Left lung (tissue), 14 donors: ENCODE measurements at regions of chr17 and their contacts with region 1.

Region 1: GRCh38 chr17:75109407-75110233 is at the start of gene ARMC7:
- DNase-seq: peak; percentile 77 to 99 (median 92)
- ATAC-seq: peak; percentile 86
- H3K4me3 ChIP-seq: peak within 1 kb of the TSS; percentile 81 to 87
- H3K27ac ChIP-seq: peak within 1 kb of the TSS; percentile 69 to 84
- H3K4me1 ChIP-seq: peaks cover 17 to 66% of the 10 kb centered on the region in 2 donors
- H3K27me3 ChIP-seq: no peaks in the 10 kb centered on the region
- CTCF ChIP-seq: no peak
- polyA plus RNA-seq, gene ARMC7: 13.2 to 15.5 (median 14.8) TPM

Region 2: DNA sequence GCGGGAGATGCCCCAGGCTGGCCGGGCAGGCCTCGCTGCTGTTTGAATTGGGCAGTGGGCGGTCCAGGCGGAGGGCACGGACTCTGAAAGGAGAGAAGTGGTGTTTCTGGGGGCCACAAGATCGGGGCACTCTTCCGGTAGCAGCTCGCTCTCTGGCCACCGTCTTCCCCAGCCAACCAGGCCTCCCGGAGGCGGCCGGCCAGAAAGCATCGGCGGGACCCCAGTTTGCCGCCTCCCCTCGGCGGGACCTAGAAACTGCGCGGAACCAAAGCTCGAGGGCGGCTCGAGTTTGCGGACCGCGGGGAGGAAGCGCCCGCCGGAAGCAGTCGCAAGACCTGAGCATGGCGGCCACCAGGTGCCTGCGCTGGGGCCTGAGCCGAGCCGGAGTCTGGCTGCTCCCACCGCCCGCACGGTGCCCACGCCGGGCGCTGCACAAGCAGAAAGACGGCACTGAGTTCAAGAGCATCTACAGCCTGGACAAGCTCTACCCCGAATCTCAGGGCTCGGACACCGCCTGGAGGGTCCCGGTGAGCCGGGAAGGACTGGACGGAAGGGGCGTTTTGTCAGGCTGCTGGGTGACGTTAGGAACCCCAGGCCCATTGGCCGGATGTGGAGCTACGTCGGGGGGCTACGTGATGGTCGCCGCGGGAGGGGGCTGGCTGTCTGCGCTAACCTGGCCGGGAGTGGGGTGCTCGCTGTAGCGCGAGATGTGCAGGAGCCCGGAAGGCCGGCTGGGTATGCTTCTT is 97.1 kb before region 1 on chr17 and contains the start of gene MRPL58:
- intact Hi-C with region 1: no loop called
- DNase-seq: peak; percentile 79 to 96 (median 90)
- ATAC-seq: peak; percentile 98
- H3K4me3 ChIP-seq: peak within 1 kb of the TSS; percentile 86 to 90
- H3K27ac ChIP-seq: peak within 1 kb of the TSS; percentile 77 to 87
- H3K4me1 ChIP-seq: peaks cover 8 to 21% of the 10 kb centered on the region in 2 donors
- H3K27me3 ChIP-seq: no peaks in the 10 kb centered on the region
- CTCF ChIP-seq: peak; percentile 26 to 56
- polyA plus RNA-seq, gene MRPL58: 18.8 to 25.1 (median 21.0) TPM

Region 3: GRCh38 chr17:75173526-75173925 is 63.9 kb after region 1 on chr17:
- intact Hi-C with region 1: loop called in 1 of 2 experiments (anchors 10 kb)
- DNase-seq: no peak
- ATAC-seq: peak; percentile 44
- H3K4me3 ChIP-seq: no peak overlapping the region
- H3K27ac ChIP-seq: no peak overlapping the region
- H3K4me1 ChIP-seq: peaks cover 0 to 21% of the 10 kb centered on the region in 2 donors
- H3K27me3 ChIP-seq: no peaks in the 10 kb centered on the region
- CTCF ChIP-seq: no peak

Region 4: GRCh38 chr17:75205037-75205792 is 95.6 kb after region 1 on chr17 and contains the start of gene NUP85:
- intact Hi-C with region 1: loop called in 1 of 2 experiments (anchors 10 kb)
- DNase-seq: peak; percentile 94 to 98 (median 96)
- ATAC-seq: peak; percentile 96
- H3K4me3 ChIP-seq: peak within 1 kb of the TSS; percentile 77 to 97
- H3K27ac ChIP-seq: peak within 1 kb of the TSS; percentile 94 to 96
- H3K4me1 ChIP-seq: peaks cover 11 to 36% of the 10 kb centered on the region in 2 donors
- H3K27me3 ChIP-seq: no peaks in the 10 kb centered on the region
- CTCF ChIP-seq: no peak
- polyA plus RNA-seq, gene NUP85: 73.3 to 101 (median 79.7) TPM